IMR-90 (cell line): ENCODE measurements at regions of chr13 and their contacts with region 1.

Region 1: GRCh38 chr13:26557393-26558023 is at the start of gene WASF3:
- DNase-seq: peak; percentile 90
- ATAC-seq: peak; percentile 95
- H3K4me3 ChIP-seq: peak within 1 kb of the TSS; percentile 83
- H3K27ac ChIP-seq: peak within 1 kb of the TSS; percentile 72
- H3K4me1 ChIP-seq: peaks cover 16% of the 10 kb centered on the region
- H3K27me3 ChIP-seq: peaks cover 7% of the 10 kb centered on the region
- CTCF ChIP-seq: no peak
- POLR2A ChIP-seq: peak; percentile 67
- RAD21 ChIP-seq: 0 out of 2 replicates have a peak, but pooled peaks have one; percentile 4
- total RNA-seq, gene WASF3: 4.3 and 5.8 TPM in 2 replicates

Region 2: DNA sequence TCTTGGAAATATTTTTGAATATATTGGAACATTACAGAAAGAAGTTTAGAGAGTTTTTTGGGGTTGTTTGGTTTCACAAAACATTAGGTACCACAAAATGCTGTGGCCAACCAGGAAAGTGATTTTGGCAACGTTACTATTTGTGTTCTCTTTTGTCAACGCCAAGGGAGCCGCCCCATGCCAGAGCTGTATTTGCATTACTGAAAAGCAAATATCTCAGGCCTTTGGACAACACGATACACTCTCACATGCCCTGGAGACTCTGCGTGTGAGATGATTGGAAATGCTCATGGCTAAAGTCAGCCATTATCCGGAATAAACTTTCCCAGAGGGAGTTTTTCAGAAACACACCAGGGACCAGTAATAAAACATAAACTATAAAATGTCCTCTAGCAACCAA is 830.3 kb before region 1 on chr13:
- CTCF ChIA-PET with region 1: no interaction called
- POLR2A ChIA-PET with region 1: no interaction called
- dilution Hi-C with region 1: no loop called
- in situ Hi-C with region 1: no loop called
- intact Hi-C with region 1: no loop called
- DNase-seq: no peak
- ATAC-seq: no peak
- H3K4me3 ChIP-seq: no peak overlapping the region
- H3K27ac ChIP-seq: no peak overlapping the region
- H3K4me1 ChIP-seq: no peaks in the 10 kb centered on the region
- H3K27me3 ChIP-seq: no peaks in the 10 kb centered on the region
- CTCF ChIP-seq: no peak
- POLR2A ChIP-seq: no peak
- RAD21 ChIP-seq: no peak

Region 3: DNA sequence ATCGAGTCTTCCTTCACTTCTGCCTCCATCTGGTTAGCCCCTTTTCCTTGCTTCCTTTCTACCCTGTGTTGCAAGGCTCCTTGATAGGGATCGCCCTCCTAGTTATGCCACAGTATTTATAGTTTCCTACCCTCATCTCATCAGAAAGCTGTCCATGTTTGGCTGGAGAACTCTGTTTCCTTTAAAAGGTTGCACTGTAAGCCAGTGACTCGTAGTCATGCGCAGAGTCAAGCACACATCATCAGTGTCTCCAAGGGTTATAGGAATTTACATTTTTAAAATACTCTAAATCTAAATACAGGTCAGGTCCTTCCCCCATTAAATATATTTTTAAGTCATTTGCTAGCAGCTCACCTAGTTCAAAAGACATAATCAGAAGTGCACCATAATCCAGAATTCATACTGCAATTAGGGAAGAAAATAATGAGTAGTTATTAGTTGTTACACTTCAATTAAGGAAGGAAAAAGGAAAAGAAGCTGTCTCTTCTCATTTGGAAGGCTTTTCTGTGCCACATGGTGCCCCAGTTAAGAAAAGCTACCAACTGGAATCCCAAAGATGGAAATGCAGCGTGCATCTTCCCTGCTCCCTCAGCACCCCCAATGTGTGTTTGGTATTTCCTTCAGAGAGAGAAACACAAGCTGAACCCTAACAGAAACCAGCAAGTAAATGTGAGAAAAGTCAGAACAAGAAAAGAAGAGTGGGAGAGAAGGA is 122.1 kb after region 1 on chr13:
- CTCF ChIA-PET with region 1: no interaction called
- POLR2A ChIA-PET with region 1: no interaction called
- dilution Hi-C with region 1: no loop called
- in situ Hi-C with region 1: no loop called
- intact Hi-C with region 1: loop called (anchors 5 kb)
- DNase-seq: peak; percentile 81
- ATAC-seq: peak; percentile 91
- H3K4me3 ChIP-seq: no peak overlapping the region
- H3K27ac ChIP-seq: peak overlapping the region; percentile 97
- H3K4me1 ChIP-seq: peaks cover 13% of the 10 kb centered on the region
- H3K27me3 ChIP-seq: no peaks in the 10 kb centered on the region
- CTCF ChIP-seq: no peak
- POLR2A ChIP-seq: no peak
- RAD21 ChIP-seq: no peak